Adrenal gland (tissue), 19 donors: ENCODE measurements at regions of chr18 and their contacts with region 1.

Region 1: GRCh38 chr18:73842795-73843394 is 304.7 kb downstream of the FBXO15 start:
- DNase-seq: peak; percentile 23 to 65 (median 37)
- H3K4me3 ChIP-seq: peak overlapping the region in 1 of 4 donors; percentile 26
- H3K27ac ChIP-seq: no peak overlapping the region
- H3K4me1 ChIP-seq: no peaks in the 10 kb centered on the region
- H3K27me3 ChIP-seq: peaks cover 6% of the 10 kb centered on the region
- CTCF ChIP-seq: peak; percentile 59 to 91 (median 77)
- POLR2A ChIP-seq: no peak

Region 2: GRCh38 chr18:72762515-72763122 is 1080.3 kb before region 1 on chr18:
- intact Hi-C with region 1: loop called in 1 of 2 experiments (anchors 10 kb)
- DNase-seq: no peak
- H3K4me3 ChIP-seq: no peak overlapping the region
- H3K27ac ChIP-seq: no peak overlapping the region
- H3K4me1 ChIP-seq: no peaks in the 10 kb centered on the region
- H3K27me3 ChIP-seq: no peaks in the 10 kb centered on the region
- CTCF ChIP-seq: peak; percentile 48 to 78 (median 66)
- POLR2A ChIP-seq: no peak